Prostate gland (tissue), 2 donors: ENCODE measurements at regions of chr10 and their contacts with region 1.

Region 1: DNA sequence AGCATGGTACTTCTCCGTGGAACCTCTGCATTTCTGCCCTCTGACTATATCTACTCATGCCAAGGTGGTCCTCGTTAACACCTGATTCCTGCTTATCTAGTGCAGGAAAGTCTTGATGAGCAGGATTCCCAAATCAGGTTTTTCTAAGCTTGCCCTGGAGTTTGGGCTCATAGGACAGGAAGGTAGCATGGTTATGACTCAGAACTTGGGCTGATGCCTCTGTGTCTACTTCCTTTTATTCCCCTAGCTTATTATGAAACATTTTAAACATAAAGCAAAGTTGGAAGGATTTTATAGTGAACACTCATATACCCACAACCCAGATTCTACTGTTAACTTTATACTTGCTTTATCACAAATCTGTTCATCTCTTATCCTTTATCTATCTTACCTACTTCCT is 5.6 kb downstream of the SUFU start:
- DNase-seq: peak; percentile 28
- H3K4me3 ChIP-seq: no peak overlapping the region
- H3K27ac ChIP-seq: peak overlapping the region in 1 of 2 donors; percentile 59
- H3K4me1 ChIP-seq: peaks cover 19% of the 10 kb centered on the region
- H3K27me3 ChIP-seq: no peaks in the 10 kb centered on the region
- CTCF ChIP-seq: no peak
- POLR2A ChIP-seq: no peak

Region 2: DNA sequence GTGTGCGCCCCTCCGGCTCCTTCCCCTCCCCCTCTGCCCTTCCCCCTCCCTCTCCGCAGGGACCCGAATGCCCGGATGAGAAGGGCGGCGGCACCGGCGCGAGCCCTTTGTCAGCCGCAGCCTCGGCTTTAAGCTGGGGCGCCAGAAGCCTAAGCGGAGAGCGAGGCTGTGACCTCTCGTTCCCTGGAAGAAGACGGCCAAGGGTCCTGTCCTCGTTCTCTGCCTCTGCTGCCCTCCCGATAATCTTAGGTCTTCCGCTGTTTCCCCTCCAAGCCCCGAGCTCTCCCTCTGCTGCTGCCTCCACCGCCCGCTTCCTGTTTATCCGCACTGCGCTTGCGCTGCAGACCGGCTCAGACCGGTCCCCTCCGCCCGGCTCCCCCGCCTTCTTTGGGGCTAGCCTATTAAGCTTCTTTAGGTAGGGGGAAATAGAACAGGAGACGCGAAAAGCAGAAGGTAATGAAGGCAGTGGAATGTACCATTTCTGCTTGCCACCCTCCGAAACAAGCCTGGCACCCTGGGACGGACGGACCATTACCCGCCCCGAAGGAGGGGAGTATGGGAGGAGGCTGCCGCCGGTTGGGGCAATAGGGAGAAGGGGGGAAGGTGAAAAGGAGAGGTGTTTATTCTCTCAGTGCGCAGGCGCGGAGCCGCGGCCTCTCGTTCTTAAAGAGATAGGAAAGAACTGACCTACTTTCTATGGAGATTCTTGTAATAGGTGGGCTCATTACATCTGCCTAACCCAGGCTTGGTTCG is 691.1 kb before region 1 on chr10 and contains the start of gene OGA:
- intact Hi-C with region 1: no loop called
- DNase-seq: peak; percentile 98
- H3K4me3 ChIP-seq: peak within 1 kb of the TSS; percentile 99 to 100
- H3K27ac ChIP-seq: peak within 1 kb of the TSS; percentile 96 to 97
- H3K4me1 ChIP-seq: peaks cover 5% of the 10 kb centered on the region
- H3K27me3 ChIP-seq: no peaks in the 10 kb centered on the region
- CTCF ChIP-seq: peak in 1 of 4 experiments; percentile 9
- POLR2A ChIP-seq: peak; percentile 98
- total RNA-seq, gene OGA: 82.5 to 143 TPM

Region 3: DNA sequence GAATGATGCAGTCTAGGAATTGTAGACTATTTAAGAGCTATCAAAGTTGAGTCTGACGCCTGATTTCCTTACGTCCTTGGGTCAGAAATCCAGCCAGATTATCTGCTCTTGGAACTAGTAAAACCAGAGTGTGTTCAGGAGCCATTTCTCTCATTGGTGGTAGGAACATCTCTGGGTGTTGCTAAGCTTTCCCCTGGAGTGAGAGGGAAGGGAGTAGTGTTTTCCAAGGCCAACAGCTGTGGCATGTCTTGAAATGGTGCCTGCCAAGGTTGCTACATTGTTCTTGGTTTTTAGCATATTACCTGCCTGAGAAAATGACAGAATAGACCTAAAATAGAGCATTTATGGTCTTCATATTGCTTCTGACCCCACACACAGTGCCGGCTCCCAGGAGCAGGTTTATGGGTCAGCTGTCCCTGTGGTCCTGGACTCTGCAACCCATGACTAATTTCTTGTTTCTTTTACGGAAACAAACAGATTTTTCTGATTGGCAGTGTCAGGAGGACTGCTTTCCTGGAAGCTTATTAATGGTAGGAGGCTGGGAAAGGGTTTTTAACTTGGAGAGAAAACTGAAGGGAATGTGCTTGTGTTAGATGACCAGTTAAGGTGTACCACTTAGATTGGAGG is 246.5 kb before region 1 on chr10:
- intact Hi-C with region 1: no loop called
- DNase-seq: no peak
- H3K4me3 ChIP-seq: no peak overlapping the region
- H3K27ac ChIP-seq: no peak overlapping the region
- H3K4me1 ChIP-seq: no peaks in the 10 kb centered on the region
- H3K27me3 ChIP-seq: no peaks in the 10 kb centered on the region
- CTCF ChIP-seq: no peak
- POLR2A ChIP-seq: no peak

Region 4: DNA sequence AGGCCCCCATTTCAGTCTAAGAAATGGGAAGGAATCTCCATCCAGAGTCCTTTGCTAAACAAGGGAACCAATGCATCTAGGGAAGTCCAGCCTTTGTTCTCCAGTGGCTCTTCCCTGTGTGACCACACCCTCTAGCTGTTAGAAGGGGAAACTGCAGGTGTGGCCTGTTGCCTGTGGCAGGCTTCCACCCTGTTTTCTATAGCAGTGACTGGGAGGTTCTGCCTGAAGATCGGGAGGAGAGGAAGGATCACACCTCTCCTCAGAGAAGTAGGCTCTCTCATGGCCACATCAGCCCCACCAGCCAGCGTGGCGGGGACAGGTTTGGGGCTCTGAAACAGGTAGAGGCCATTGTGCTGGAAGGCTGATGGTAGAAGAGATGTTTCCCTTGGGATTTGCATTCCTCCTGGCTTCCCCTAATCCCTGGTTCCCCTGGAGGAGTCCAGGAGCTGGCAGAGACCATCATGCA is 87.2 kb after region 1 on chr10:
- intact Hi-C with region 1: loop called (anchors 5 kb)
- DNase-seq: peak; percentile 46
- H3K4me3 ChIP-seq: no peak overlapping the region
- H3K27ac ChIP-seq: no peak overlapping the region
- H3K4me1 ChIP-seq: no peaks in the 10 kb centered on the region
- H3K27me3 ChIP-seq: no peaks in the 10 kb centered on the region
- CTCF ChIP-seq: peak; percentile 44 to 79 (median 62)
- POLR2A ChIP-seq: no peak